MCF 10A (cell line): ENCODE measurements at regions of chr1 and their contacts with region 1.

Region 1: DNA sequence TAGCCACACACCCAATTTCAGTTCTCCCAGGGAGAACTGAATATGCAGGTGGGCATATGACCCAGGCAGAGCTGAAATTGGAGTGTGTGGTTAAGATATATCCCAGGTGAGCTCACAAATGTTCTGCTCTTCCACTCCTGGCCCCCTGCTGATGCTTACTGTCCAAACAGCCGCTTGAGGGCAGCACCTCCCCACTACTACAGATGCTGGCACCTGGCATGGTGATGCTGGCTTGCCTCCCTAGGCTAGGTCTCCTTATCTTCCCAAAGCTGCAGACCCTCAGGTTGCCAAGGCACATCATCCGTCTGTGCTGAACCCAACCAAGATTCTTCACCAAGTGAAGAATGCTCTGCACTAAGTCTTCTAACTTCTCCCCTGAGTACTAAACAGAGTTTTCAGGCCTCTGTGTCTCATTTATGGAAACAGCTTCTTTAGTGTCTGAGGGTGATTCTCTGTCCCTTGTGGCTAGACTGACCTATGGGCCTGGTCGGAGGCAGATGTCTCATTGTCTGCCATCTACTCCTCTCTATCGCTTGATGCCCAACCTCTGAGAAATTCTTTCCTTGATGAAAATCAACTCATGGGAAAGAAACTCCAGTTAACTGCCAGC is 27.2 kb downstream of the XCL1 start:
- DNase-seq: peak; percentile 88
- H3K4me3 Mint-ChIP-seq: no peak overlapping the region
- H3K27ac Mint-ChIP-seq: no peak overlapping the region
- H3K4me1 Mint-ChIP-seq: peaks cover 7% of the 10 kb centered on the region
- H3K27me3 Mint-ChIP-seq: no peaks in the 10 kb centered on the region
- CTCF ChIP-seq: peak; percentile 99

Region 2: GRCh38 chr1:168447871-168448270 is 155.7 kb before region 1 on chr1:
- CTCF ChIA-PET with region 1: no interaction called
- POLR2A ChIA-PET with region 1: no interaction called
- intact Hi-C with region 1: no loop called
- DNase-seq: no peak
- H3K4me3 Mint-ChIP-seq: no peak overlapping the region
- H3K27ac Mint-ChIP-seq: no peak overlapping the region
- H3K4me1 Mint-ChIP-seq: no peaks in the 10 kb centered on the region
- H3K27me3 Mint-ChIP-seq: peaks cover 22% of the 10 kb centered on the region
- CTCF ChIP-seq: no peak

Region 3: GRCh38 chr1:168613691-168614231 is 10.2 kb after region 1 on chr1:
- CTCF ChIA-PET with region 1: interaction called, 60 read pairs
- POLR2A ChIA-PET with region 1: interaction called, 3 read pairs
- intact Hi-C with region 1: no loop called
- DNase-seq: no peak
- H3K4me3 Mint-ChIP-seq: no peak overlapping the region
- H3K27ac Mint-ChIP-seq: no peak overlapping the region
- H3K4me1 Mint-ChIP-seq: no peaks in the 10 kb centered on the region
- H3K27me3 Mint-ChIP-seq: no peaks in the 10 kb centered on the region
- CTCF ChIP-seq: no peak

Region 4: DNA sequence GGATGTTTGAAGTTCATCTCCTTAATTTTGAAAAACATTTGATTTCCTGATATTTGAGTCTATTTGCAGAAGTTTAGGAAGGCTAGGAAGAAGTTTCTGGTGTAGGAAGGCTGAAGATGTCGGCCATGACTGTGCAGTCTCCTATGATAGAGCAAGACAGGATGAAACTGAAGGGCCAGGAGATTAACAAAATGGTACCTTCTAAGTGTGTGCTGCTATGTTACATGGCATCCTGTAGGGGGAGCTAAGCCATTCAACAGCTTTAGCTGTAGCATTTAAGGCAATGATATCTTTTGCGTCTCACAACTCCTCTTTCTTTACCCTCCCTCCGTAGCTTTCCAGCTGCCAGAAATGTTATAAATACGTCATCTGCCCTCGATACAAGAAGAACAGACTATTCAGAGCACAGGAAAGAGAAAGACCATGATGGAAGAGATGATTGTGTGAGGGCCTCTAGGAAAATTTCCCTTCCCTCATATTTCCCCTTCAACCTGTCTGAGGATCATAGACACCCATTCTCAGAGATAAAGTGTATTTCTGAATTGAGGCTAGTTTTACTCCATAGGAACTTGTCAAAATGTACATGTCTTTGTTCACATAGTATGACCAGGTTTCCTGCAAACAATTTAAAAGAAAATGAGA is 33.9 kb after region 1 on chr1:
- CTCF ChIA-PET with region 1: interaction called, 14 read pairs
- POLR2A ChIA-PET with region 1: interaction called, 4 read pairs
- intact Hi-C with region 1: loop called (anchors 2 kb)
- DNase-seq: peak; percentile 64
- H3K4me3 Mint-ChIP-seq: peak overlapping the region; percentile 38
- H3K27ac Mint-ChIP-seq: peak overlapping the region; percentile 84
- H3K4me1 Mint-ChIP-seq: peaks cover 25% of the 10 kb centered on the region
- H3K27me3 Mint-ChIP-seq: no peaks in the 10 kb centered on the region
- CTCF ChIP-seq: peak; percentile 86

Region 5: GRCh38 chr1:169115891-169116585 is 512.4 kb after region 1 on chr1:
- CTCF ChIA-PET with region 1: interaction called, 107 read pairs
- POLR2A ChIA-PET with region 1: no interaction called
- intact Hi-C with region 1: no loop called
- DNase-seq: no peak
- H3K4me3 Mint-ChIP-seq: no peak overlapping the region
- H3K27ac Mint-ChIP-seq: peak overlapping the region; percentile 49
- H3K4me1 Mint-ChIP-seq: peaks cover 60% of the 10 kb centered on the region
- H3K27me3 Mint-ChIP-seq: no peaks in the 10 kb centered on the region
- CTCF ChIP-seq: no peak

Region 6: DNA sequence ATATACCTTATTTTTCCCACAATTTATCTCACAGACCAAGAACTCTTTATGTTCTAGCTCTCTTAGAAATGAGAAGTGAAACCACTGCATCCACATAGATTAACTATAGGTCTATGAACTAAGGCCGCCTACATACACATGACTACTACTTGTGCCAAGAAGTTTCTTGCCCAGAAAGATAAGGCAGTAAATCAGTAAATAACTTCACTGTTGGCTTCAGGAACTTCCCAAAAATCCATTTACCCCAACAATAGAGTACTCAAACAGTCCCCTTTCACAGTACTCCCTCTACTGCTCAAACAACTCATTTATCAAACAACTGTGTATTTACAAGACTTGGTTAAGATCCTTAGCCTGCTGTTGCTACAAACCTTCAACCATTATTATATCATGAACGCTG is 667.5 kb after region 1 on chr1:
- CTCF ChIA-PET with region 1: interaction called, 11 read pairs
- POLR2A ChIA-PET with region 1: interaction called, 4 read pairs
- intact Hi-C with region 1: no loop called
- DNase-seq: peak; percentile 12
- H3K4me3 Mint-ChIP-seq: no peak overlapping the region
- H3K27ac Mint-ChIP-seq: peak overlapping the region; percentile 10
- H3K4me1 Mint-ChIP-seq: peaks cover 11% of the 10 kb centered on the region
- H3K27me3 Mint-ChIP-seq: no peaks in the 10 kb centered on the region
- CTCF ChIP-seq: peak; percentile 15

Region 7: GRCh38 chr1:169361281-169361680 is 757.7 kb after region 1 on chr1:
- CTCF ChIA-PET with region 1: interaction called, 32 read pairs
- POLR2A ChIA-PET with region 1: no interaction called
- intact Hi-C with region 1: no loop called
- DNase-seq: no peak
- H3K4me3 Mint-ChIP-seq: no peak overlapping the region
- H3K27ac Mint-ChIP-seq: no peak overlapping the region
- H3K4me1 Mint-ChIP-seq: peaks cover 17% of the 10 kb centered on the region
- H3K27me3 Mint-ChIP-seq: no peaks in the 10 kb centered on the region
- CTCF ChIP-seq: no peak

Region 8: GRCh38 chr1:169546087-169546995 is 942.7 kb after region 1 on chr1:
- CTCF ChIA-PET with region 1: interaction called, 19 read pairs
- POLR2A ChIA-PET with region 1: no interaction called
- intact Hi-C with region 1: loop called (anchors 1 kb)
- DNase-seq: peak; percentile 88
- H3K4me3 Mint-ChIP-seq: no peak overlapping the region
- H3K27ac Mint-ChIP-seq: no peak overlapping the region
- H3K4me1 Mint-ChIP-seq: no peaks in the 10 kb centered on the region
- H3K27me3 Mint-ChIP-seq: peaks cover 8% of the 10 kb centered on the region
- CTCF ChIP-seq: peak; percentile 86